IMR-90 (cell line): ENCODE measurements at regions of chr10 and their contacts with region 1.

Region 1: GRCh38 chr10:101067356-101068083 is 5.7 kb downstream of the KAZALD1 start:
- DNase-seq: peak; percentile 83
- ATAC-seq: peak; percentile 58
- H3K4me3 ChIP-seq: peak overlapping the region; percentile 42
- H3K27ac ChIP-seq: peak overlapping the region; percentile 43
- H3K4me1 ChIP-seq: peaks cover 17% of the 10 kb centered on the region
- H3K27me3 ChIP-seq: peaks cover 10% of the 10 kb centered on the region
- CTCF ChIP-seq: peak; percentile 89
- POLR2A ChIP-seq: no peak
- RAD21 ChIP-seq: peak; percentile 86

Region 2: DNA sequence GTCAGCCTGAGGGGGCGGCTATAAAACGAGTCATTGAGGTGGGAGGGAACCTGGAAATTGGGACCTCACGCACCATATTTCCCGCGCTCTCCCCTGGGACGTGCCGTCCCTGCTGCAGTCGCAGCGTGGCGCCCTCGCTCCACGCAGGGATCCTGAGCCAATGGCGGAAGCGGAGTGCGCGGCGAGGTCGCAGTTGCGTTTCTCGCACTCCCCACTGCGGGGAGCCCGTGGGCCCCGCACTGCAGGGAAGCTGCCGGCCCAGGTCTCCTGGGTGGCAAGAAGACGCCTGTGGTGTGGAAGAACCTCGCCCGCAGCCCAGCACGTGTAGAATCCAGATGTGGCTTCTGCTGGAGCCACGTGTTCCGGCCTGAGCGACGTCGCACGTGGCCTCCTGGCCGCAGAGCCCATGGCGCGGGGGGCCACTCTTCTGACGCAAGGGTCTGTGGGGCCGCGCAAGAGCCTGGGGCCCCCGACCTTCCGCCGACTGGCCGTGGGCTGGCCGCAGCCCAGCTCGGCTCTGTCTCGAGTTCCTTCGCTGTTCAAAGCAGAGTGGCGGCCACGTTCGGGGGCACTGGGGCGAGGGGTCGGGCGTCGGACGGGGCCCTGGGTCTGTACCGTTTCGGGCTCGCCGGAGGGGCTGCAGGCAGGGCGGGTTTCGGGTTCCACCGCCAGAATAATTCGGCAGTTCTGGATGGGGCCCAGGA is 505.4 kb before region 1 on chr10:
- CTCF ChIA-PET with region 1: no interaction called
- POLR2A ChIA-PET with region 1: no interaction called
- dilution Hi-C with region 1: no loop called
- in situ Hi-C with region 1: no loop called
- intact Hi-C with region 1: no loop called
- DNase-seq: peak; percentile 55
- ATAC-seq: peak; percentile 82
- H3K4me3 ChIP-seq: no peak overlapping the region
- H3K27ac ChIP-seq: no peak overlapping the region
- H3K4me1 ChIP-seq: peaks cover 2% of the 10 kb centered on the region
- H3K27me3 ChIP-seq: peaks cover 36% of the 10 kb centered on the region
- CTCF ChIP-seq: peak; percentile 94
- POLR2A ChIP-seq: no peak; the same call in 1 of the 2 replicates
- RAD21 ChIP-seq: peak; percentile 88

Region 3: DNA sequence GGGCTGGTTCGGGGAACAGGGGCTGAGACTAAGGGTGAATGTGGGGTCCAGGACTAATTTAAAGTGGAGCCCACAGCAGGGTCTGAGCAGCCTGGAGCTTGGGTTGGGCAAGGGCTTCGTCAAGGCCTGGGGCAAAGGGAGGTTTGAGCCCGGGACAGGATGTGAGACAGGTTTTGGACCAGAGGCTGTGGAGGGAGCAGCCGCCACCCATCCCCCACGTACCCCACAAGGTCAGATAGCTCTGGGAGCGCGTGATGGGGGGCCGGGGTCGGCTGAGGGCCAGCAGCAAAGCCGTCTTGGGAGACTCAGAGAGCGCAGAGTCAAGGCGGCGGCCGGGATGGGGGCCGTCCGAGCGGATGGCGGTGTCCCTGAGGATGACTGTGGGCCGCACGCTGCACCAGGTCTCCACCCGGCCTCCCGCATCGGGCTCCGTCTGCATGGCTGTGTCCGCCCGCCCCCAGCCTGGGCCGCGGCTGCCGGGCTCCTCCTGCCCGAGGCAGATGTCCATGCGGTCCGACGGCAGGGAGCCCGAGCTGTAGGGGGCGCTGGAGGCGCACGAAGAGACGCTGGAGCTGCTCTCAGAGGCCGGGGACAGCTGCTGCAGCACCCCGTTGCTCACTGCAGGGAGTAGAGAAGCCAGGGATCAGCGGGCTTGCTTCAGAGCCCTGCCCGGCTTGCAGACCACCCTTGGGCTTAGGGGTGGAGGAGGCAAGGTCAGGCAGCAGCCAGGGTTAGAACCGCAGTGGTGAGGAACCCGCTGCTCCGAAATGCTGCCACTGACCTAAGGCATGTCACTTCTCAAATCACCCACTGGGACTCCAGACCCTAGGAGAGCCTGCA is 48.7 kb before region 1 on chr10:
- CTCF ChIA-PET with region 1: interaction called, 4 read pairs
- POLR2A ChIA-PET with region 1: no interaction called
- dilution Hi-C with region 1: no loop called
- in situ Hi-C with region 1: no loop called
- intact Hi-C with region 1: loop called (anchors 2 kb)
- DNase-seq: peak; percentile 77
- ATAC-seq: peak; percentile 90
- H3K4me3 ChIP-seq: no peak overlapping the region
- H3K27ac ChIP-seq: no peak overlapping the region
- H3K4me1 ChIP-seq: peaks cover 10% of the 10 kb centered on the region
- H3K27me3 ChIP-seq: peaks cover 1% of the 10 kb centered on the region; the same call in 1 of the 2 replicates
- CTCF ChIP-seq: peak; percentile 89
- POLR2A ChIP-seq: no peak
- RAD21 ChIP-seq: peak; percentile 79

Region 4: DNA sequence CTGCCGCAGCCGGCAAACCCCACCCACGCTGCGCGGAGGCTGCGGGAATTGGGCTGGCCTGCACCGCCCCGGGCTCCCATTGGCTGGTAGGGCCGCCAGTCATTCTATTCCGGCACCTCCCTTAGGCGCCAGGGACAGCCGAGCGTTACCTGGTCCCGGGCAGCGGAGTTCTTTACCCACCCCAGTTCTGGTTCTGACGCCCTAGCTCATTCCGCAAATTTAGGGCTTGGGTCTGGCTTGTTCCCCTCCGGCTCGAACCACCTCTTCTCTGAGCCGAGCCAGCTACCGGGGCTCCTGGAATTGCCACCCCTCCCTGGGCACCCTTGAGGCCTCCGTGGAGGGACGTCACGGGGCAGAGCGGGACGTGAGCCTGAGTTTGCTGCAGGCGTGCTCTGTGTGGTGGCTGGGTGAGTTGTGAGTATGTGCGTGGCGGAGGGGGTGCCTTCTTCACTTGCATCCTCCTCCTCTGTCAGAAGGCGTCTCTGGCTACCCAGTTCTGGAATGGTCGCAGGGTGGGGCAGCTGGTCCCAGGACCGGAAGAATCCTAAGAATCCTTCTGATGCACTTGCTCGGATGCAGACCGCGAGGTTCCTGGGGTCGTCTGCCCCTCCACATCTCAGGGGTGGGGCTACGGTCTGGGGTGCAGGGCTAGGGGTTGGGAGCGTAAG is 36.3 kb before region 1 on chr10 and contains the starts of genes PDZD7 and SFXN3:
- CTCF ChIA-PET with region 1: no interaction called
- POLR2A ChIA-PET with region 1: no interaction called
- dilution Hi-C with region 1: no loop called
- in situ Hi-C with region 1: no loop called
- intact Hi-C with region 1: loop called (anchors 5 kb)
- DNase-seq: peak; percentile 91
- ATAC-seq: peak; percentile 82
- H3K4me3 ChIP-seq: peak within 1 kb of the TSS; percentile 60
- H3K27ac ChIP-seq: peak within 1 kb of the TSS; percentile 87
- H3K4me1 ChIP-seq: peaks cover 2% of the 10 kb centered on the region
- H3K27me3 ChIP-seq: peaks cover 2% of the 10 kb centered on the region; the same call in 1 of the 2 replicates
- CTCF ChIP-seq: no peak
- POLR2A ChIP-seq: peak; percentile 13; the same call in 1 of the 2 replicates
- RAD21 ChIP-seq: no peak
- total RNA-seq, gene PDZD7: 0.83 and 0.90 TPM in 2 replicates
- total RNA-seq, gene SFXN3: 53.3 and 64.7 TPM in 2 replicates

Region 5: DNA sequence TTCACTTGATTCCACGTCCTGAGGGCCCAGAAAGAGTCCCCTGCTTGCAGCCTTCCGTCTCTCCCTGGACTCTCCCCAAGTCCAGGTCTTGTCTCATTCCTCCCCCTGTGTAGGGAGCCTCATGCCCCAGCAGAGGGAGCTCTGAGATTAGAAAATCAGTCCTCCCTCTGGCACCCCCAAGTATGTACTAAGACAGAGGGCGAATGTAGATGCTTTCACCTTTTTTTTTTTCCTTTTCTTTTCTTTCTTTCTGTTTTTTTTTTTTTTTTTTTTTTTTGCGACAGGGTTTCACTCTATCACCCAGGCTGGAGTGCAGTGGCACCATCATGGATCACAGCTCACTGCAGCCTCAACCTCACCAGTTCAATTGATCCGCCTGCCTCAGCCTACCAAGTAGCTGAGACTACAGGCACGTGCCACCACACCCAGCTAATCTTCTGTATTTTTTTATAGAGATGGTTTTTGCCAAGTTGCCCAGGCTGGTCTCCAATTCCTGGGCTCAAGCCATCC is 26.2 kb before region 1 on chr10:
- CTCF ChIA-PET with region 1: interaction called, 4 read pairs
- POLR2A ChIA-PET with region 1: interaction called, 4 read pairs
- dilution Hi-C with region 1: no loop called
- in situ Hi-C with region 1: no loop called
- intact Hi-C with region 1: loop called (anchors 1 kb)
- DNase-seq: peak; percentile 88
- ATAC-seq: peak; percentile 73
- H3K4me3 ChIP-seq: no peak overlapping the region
- H3K27ac ChIP-seq: no peak overlapping the region
- H3K4me1 ChIP-seq: peaks cover 10% of the 10 kb centered on the region
- H3K27me3 ChIP-seq: no peaks in the 10 kb centered on the region
- CTCF ChIP-seq: peak; percentile 92
- POLR2A ChIP-seq: no peak
- RAD21 ChIP-seq: peak; percentile 86

Region 6: GRCh38 chr10:101141616-101142532 is 74.4 kb after region 1 on chr10:
- CTCF ChIA-PET with region 1: no interaction called
- POLR2A ChIA-PET with region 1: no interaction called
- dilution Hi-C with region 1: no loop called
- in situ Hi-C with region 1: no loop called
- intact Hi-C with region 1: no loop called
- DNase-seq: peak; percentile 72
- ATAC-seq: peak; percentile 95
- H3K4me3 ChIP-seq: no peak overlapping the region
- H3K27ac ChIP-seq: no peak overlapping the region
- H3K4me1 ChIP-seq: no peaks in the 10 kb centered on the region
- H3K27me3 ChIP-seq: peaks cover 92% of the 10 kb centered on the region
- CTCF ChIP-seq: peak; percentile 96
- POLR2A ChIP-seq: no peak
- RAD21 ChIP-seq: peak; percentile 87